ENCODE measurements at regions of chr11 and their contacts with region 1.

Region 1: GRCh38 chr11:114262681-114263512 is 33.3 kb upstream of the NNMT start:
- DNase-seq: peak; percentile 52
- H3K4me3 ChIP-seq: no peak overlapping the region
- H3K27ac ChIP-seq: no peak overlapping the region
- H3K27me3 ChIP-seq: peaks cover 12% of the 10 kb centered on the region
- CTCF ChIP-seq: peak; percentile 88

Region 2: DNA sequence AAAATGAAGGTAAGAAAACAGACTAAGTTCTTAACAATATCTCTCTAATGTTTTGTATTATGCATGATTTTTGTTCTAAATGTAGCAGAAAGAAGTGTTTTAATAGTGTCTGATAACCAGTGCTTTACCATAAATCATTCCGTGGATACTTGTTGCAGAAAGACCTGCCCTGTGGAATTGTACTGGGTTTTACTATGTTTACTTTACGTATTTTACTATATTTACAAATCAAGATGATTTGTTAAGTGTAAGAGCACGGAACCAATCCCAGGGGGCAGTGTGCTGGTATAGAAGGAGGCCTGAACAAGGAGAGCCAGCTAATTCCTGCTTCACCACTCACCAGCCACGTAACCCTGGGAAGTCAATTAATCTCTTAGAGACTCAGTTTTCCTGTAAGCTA is 356.9 kb before region 1 on chr11:
- in situ Hi-C with region 1: loop called (anchors 25 kb)
- DNase-seq: no peak
- H3K4me3 ChIP-seq: no peak overlapping the region
- H3K27ac ChIP-seq: no peak overlapping the region
- H3K27me3 ChIP-seq: no peaks in the 10 kb centered on the region
- CTCF ChIP-seq: peak; percentile 45

Region 3: GRCh38 chr11:114036156-114036811 is 226.6 kb before region 1 on chr11:
- in situ Hi-C with region 1: loop called (anchors 25 kb)
- DNase-seq: no peak
- H3K4me3 ChIP-seq: peak overlapping the region; percentile 43
- H3K27ac ChIP-seq: no peak overlapping the region
- H3K27me3 ChIP-seq: peaks cover 2% of the 10 kb centered on the region
- CTCF ChIP-seq: peak; percentile 77

Measured in brain microvascular endothelial cell (primary cell).